Ovary (tissue), 10 donors: ENCODE measurements at regions of chr2 and their contacts with region 1.

Region 1: DNA sequence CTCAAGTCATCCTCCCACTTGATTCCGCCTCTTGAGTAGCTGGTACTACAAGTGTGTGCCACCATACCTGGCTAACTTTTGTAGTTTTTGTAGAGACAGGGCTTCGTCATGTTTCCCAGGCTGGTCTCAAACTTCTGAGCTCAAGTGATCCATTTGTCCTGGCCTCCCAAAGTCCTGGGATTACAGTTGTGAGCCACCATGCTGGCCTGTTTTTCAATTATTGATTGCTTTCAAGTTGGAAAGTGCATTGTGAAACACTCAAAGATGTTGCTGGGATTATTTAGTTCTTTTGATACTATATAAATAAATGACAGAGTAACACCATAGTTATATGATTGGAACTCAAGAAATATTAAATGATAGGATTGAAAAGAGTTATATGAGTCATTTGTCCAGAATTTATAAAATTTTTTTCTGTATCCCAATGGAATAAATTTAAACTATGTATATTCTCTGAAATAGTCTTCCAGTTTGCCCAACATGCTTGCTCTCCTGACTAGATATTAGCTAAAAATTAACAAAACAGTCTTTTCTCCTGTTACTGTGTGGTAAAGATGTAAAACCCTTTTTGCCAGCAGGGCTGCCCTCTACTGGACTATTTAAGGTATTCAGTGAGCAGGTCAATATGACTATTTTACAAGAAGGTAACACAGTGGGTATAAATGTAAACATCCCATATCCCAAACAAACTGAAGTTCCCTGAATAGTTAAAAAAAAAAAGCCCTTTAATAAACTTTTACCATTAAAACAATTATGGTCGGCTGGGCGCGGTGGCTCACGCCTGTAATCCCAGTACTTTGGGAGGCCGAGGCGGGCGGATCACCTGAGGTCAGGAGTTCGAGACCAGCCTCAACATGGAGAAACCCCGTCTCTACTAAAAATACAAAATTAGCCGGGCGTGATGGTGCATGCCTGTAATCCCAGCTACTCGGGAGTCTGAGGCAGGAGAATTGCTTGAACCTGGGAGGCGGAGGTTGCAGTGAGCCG is 42.7 kb downstream of the ACSL3 start:
- DNase-seq: peak in 1 of 5 donors; percentile 41
- H3K4me3 ChIP-seq: no peak overlapping the region
- H3K27ac ChIP-seq: no peak overlapping the region
- H3K4me1 ChIP-seq: peaks cover 5% of the 10 kb centered on the region
- H3K27me3 ChIP-seq: no peaks in the 10 kb centered on the region
- CTCF ChIP-seq: peak in 2 of 3 donors; percentile 40 to 43
- EP300 ChIP-seq: no peak
- POLR2A ChIP-seq: no peak

Region 2: DNA sequence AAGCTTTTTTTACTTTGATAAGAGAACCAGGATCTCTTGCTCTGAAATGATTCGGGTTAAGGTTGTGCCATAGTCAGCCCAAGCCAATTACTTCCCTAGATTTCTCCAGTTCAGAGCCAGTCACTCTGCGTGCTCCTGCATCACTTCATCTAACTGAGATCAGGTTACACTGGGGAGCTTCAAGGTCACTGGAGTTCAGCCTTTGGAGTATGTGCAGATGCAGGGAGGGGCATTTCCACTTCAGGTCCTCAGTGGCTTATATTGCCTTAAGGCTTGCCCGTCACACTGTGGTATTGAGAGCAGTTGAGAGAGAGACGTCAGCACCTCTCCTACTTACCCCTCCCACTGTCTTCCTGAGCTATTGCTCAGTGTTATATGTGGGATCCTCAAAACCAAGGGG is 1649.2 kb before region 1 on chr2:
- intact Hi-C with region 1: no loop called
- DNase-seq: no peak
- H3K4me3 ChIP-seq: no peak overlapping the region
- H3K27ac ChIP-seq: no peak overlapping the region
- H3K4me1 ChIP-seq: peaks cover 2% of the 10 kb centered on the region
- H3K27me3 ChIP-seq: no peaks in the 10 kb centered on the region
- CTCF ChIP-seq: no peak
- EP300 ChIP-seq: no peak
- POLR2A ChIP-seq: no peak

Region 3: GRCh38 chr2:222707689-222708525 is 195.6 kb before region 1 on chr2:
- intact Hi-C with region 1: loop called (anchors 5 to 10 kb)
- DNase-seq: peak; percentile 68 to 89 (median 84)
- H3K4me3 ChIP-seq: no peak overlapping the region
- H3K27ac ChIP-seq: no peak overlapping the region
- H3K4me1 ChIP-seq: no peaks in the 10 kb centered on the region
- H3K27me3 ChIP-seq: no peaks in the 10 kb centered on the region
- CTCF ChIP-seq: peak; percentile 54 to 94 (median 90)
- EP300 ChIP-seq: no peak
- POLR2A ChIP-seq: no peak